H1 (cell line): ENCODE measurements at regions of chr5 and their contacts with region 1.

Region 1: GRCh38 chr5:130871346-130872086 is 293.5 kb downstream of the HINT1 start:
- DNase-seq: peak in 1 of 2 experiments; percentile 52
- H3K4me3 ChIP-seq: no peak overlapping the region
- H3K27ac ChIP-seq: no peak overlapping the region
- H3K4me1 ChIP-seq: peaks cover 0 to 3% (median 1%) of the 10 kb centered on the region in 4 experiments; a peak in 2 of 7 replicates
- H3K27me3 ChIP-seq: no peaks in the 10 kb centered on the region
- CTCF ChIP-seq: peak in 2 of 3 experiments; percentile 56 to 58; a peak in 3 of 4 replicates
- EP300 ChIP-seq: no peak
- POLR2A ChIP-seq: no peak
- RAD21 ChIP-seq: peak; percentile 56 to 61

Region 2: DNA sequence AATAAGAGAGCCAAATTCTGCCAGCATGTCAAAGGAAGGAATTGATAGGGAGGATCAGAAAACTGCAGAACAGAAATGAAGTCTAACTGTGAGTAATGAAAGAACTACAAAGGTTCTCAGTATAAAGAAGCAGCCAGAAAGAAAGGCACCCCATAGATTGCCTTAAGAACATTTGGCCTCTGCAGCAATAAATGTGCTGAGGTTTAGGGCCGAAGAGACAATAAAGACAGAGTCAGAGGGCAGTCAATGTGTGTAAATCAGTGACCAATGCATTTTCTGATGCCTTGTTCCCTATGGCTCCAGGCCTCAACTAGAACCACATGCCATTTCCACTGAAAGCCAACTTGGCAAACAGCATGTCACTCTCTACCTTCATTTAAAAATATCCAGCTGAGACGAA is 12.5 kb after region 1 on chr5:
- CTCF ChIA-PET with region 1: interaction called, 12 read pairs
- POLR2A ChIA-PET with region 1: interaction called, 4 read pairs
- DNase-seq: no peak
- H3K4me3 ChIP-seq: no peak overlapping the region; a peak in 1 of 8 replicates
- H3K27ac ChIP-seq: no peak overlapping the region
- H3K4me1 ChIP-seq: peaks cover 0 to 2% (median under 1%) of the 10 kb centered on the region in 4 experiments; a peak in 2 of 7 replicates
- H3K27me3 ChIP-seq: no peaks in the 10 kb centered on the region
- CTCF ChIP-seq: no peak
- EP300 ChIP-seq: no peak
- POLR2A ChIP-seq: no peak
- RAD21 ChIP-seq: no peak

Region 3: DNA sequence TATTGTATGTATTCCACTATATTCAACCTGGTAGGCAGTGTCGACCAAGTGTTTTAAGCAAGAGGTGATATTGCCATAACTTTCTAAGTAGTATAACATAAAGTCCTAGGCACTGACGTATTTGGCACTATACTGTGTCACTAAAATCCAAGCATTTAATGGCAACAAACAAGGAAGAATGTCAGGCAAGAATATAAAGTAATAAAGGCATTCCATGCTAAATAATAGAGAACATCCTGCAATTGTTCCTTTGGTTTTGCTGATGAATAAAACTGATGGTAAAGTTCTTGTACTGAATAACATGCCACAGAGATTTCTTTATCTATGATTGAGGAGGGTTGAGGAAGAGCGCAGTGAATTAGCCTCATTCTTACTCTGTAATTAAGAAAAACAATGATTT is 36.7 kb after region 1 on chr5:
- CTCF ChIA-PET with region 1: interaction called, 11 read pairs
- POLR2A ChIA-PET with region 1: no interaction called
- DNase-seq: no peak
- H3K4me3 ChIP-seq: no peak overlapping the region
- H3K27ac ChIP-seq: no peak overlapping the region
- H3K4me1 ChIP-seq: no peaks in the 10 kb centered on the region
- H3K27me3 ChIP-seq: no peaks in the 10 kb centered on the region
- CTCF ChIP-seq: no peak
- EP300 ChIP-seq: no peak
- POLR2A ChIP-seq: no peak
- RAD21 ChIP-seq: no peak

Region 4: DNA sequence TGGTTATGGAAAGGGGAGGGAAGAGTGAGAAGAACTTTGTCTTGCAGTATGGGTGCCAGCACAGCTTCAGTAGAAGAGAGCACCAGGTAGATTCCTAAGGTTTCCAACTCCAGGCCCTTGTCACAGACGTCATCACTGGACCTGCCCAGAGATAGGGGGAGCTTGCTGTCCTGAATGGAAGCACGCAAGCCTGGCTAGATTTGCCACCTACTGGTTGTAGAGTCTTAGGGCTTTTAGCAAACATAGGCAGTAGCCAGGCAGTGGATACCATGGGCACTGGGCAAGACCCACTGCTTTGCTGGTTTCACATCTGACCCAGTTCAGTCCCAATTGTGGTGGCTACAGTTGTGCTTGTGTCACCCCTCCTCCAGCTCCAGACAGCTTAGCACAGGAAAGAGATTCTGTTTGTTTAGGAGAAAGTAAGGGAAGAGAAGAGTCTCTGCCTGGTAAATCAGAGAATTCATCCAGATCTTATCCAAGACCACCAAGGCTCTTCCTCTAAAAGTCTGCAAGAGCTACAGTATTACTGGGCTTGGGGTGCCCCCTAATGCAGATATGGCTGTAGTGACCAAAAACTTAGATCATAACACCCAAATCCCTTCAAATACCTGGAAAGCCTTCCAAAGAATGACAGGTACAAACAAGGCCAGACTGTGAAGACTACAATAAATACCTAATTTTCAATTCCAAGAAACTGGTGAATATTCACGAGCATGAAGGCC is 134.6 kb after region 1 on chr5:
- CTCF ChIA-PET with region 1: interaction called, 19 read pairs
- POLR2A ChIA-PET with region 1: no interaction called
- DNase-seq: no peak
- H3K4me3 ChIP-seq: no peak overlapping the region
- H3K27ac ChIP-seq: no peak overlapping the region
- H3K4me1 ChIP-seq: no peaks in the 10 kb centered on the region
- H3K27me3 ChIP-seq: no peaks in the 10 kb centered on the region
- CTCF ChIP-seq: peak in 2 of 3 experiments; percentile 42 to 47; a peak in 3 of 4 replicates
- EP300 ChIP-seq: no peak
- POLR2A ChIP-seq: no peak
- RAD21 ChIP-seq: peak; percentile 74 to 76